Caco-2 (cell line): ENCODE measurements at regions of chr9 and their contacts with region 1.

Region 1: DNA sequence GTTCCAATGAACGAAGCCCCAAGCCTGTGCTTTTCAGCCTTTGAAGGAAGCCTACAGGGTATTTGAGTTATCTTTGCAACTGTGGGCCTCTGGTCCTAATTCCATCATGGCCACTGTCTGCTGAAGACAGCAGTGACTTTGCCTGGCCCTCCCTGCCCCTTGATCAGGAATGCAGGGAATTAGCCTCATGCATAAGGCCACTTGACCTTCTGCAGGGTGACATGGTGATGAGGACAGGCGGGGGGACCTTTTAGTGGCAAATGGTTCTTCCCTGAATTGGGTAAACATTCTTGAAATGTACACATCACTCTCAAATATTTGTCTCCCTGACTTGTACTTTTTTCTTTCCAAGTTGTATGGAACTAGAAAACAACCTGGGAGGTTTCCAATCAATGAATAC is 25.2 kb upstream of the XPA start:
- DNase-seq: peak; percentile 80 to 89
- H3K4me3 ChIP-seq: no peak overlapping the region
- H3K4me3 Mint-ChIP-seq: no peak overlapping the region
- H3K27ac Mint-ChIP-seq: peak overlapping the region; percentile 53
- H3K4me1 ChIP-seq: peaks cover 24% of the 10 kb centered on the region
- H3K4me1 Mint-ChIP-seq: peaks cover 5% of the 10 kb centered on the region
- H3K27me3 ChIP-seq: no peaks in the 10 kb centered on the region
- H3K27me3 Mint-ChIP-seq: no peaks in the 10 kb centered on the region
- CTCF ChIP-seq: no peak

Region 2: DNA sequence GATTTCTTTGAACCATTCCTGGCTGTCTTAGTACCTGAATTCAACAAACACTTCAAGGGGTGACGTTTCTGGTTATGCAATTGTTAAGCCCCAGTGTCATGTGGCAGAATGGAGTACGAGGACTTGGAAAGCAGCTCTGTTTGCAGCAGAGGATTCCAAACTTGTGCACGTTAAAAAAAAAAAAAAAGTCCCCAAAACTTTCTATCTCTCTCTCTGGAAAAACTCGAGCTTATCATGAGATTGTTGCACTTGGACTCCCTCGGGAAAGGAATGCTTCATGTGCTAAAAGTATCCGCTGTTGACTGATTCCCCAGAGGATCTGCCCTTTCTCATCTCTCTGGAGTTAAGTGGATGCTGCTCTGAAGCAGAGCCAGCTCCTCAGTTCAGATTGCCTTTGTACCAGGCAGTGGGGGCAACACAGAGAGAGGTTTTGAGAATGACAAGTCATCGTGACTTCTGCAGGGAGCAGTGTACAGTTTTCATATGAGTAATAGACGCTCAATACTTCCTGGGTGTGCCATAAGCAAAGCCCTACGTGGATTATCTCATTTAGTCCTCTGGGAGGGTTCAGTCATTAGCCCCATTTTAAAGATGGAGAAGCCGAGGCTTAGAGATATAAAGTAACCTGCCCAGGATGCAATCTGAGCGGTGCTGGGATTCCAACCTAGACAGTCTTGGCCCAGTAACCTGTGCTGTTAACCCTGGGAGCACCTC is 192.8 kb before region 1 on chr9:
- CTCF ChIA-PET with region 1: no interaction called
- POLR2A ChIA-PET with region 1: no interaction called
- intact Hi-C with region 1: no loop called
- DNase-seq: no peak
- H3K4me3 ChIP-seq: no peak overlapping the region
- H3K4me3 Mint-ChIP-seq: no peak overlapping the region
- H3K27ac Mint-ChIP-seq: no peak overlapping the region
- H3K4me1 ChIP-seq: peaks cover 12% of the 10 kb centered on the region; the same call in 1 of the 2 replicates
- H3K4me1 Mint-ChIP-seq: peaks cover 10% of the 10 kb centered on the region
- H3K27me3 ChIP-seq: no peaks in the 10 kb centered on the region
- H3K27me3 Mint-ChIP-seq: no peaks in the 10 kb centered on the region
- CTCF ChIP-seq: no peak

Region 3: DNA sequence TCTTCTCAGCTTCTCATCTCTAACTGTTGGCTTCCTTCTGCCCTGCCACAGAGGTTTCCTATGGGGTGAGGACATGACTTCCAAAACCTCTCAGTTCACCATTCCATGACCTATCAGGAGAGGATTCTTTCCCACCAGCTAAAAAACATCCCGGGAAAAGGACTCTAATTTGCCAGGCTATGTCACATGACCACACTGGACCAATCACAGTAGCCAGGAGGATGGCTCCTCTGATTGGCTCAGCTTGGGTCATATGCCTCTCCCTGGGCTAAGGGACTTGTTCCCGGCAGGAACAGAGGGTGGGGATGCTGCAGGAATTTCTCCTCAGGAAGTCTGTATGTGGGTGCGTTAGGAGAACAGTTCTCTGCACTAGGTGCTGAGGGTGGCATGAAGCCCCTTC is 15.1 kb after region 1 on chr9:
- CTCF ChIA-PET with region 1: no interaction called
- POLR2A ChIA-PET with region 1: no interaction called
- intact Hi-C with region 1: loop called (anchors 1 kb)
- DNase-seq: peak; percentile 21 to 65
- H3K4me3 ChIP-seq: no peak overlapping the region
- H3K4me3 Mint-ChIP-seq: no peak overlapping the region
- H3K27ac Mint-ChIP-seq: no peak overlapping the region
- H3K4me1 ChIP-seq: peaks cover 39% of the 10 kb centered on the region
- H3K4me1 Mint-ChIP-seq: peaks cover 8% of the 10 kb centered on the region
- H3K27me3 ChIP-seq: no peaks in the 10 kb centered on the region
- H3K27me3 Mint-ChIP-seq: no peaks in the 10 kb centered on the region
- CTCF ChIP-seq: no peak

Region 4: GRCh38 chr9:97747201-97747965 is 25.1 kb after region 1 on chr9:
- CTCF ChIA-PET with region 1: no interaction called
- POLR2A ChIA-PET with region 1: no interaction called
- intact Hi-C with region 1: loop called (anchors 1 kb)
- DNase-seq: peak; percentile 84 to 88
- H3K4me3 ChIP-seq: no peak overlapping the region
- H3K4me3 Mint-ChIP-seq: peak overlapping the region; percentile 71
- H3K27ac Mint-ChIP-seq: peak overlapping the region; percentile 85
- H3K4me1 ChIP-seq: peaks cover 81% of the 10 kb centered on the region
- H3K4me1 Mint-ChIP-seq: peaks cover 65% of the 10 kb centered on the region
- H3K27me3 ChIP-seq: no peaks in the 10 kb centered on the region
- H3K27me3 Mint-ChIP-seq: no peaks in the 10 kb centered on the region
- CTCF ChIP-seq: no peak

Region 5: DNA sequence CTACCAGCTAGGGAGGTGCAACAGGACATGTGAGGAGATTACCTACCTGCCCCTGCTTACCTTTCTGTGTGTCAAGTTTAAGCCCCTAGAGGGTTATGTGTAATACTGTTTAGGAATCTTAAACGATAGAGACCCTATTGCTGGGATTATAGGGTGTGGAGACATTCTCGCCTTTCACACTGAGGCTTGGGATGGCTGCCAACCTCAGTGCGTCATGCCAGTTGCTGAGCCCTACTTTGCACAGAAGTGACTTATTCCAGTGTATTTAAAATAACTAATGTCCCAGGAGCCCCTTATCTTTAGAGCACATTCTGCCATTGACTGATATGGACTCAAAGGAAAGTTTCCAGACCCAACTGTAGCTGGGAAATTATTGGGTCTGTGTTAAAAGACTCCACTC is 51.4 kb after region 1 on chr9:
- CTCF ChIA-PET with region 1: no interaction called
- POLR2A ChIA-PET with region 1: no interaction called
- intact Hi-C with region 1: no loop called
- DNase-seq: no peak
- H3K4me3 ChIP-seq: no peak overlapping the region
- H3K4me3 Mint-ChIP-seq: no peak overlapping the region
- H3K27ac Mint-ChIP-seq: no peak overlapping the region
- H3K4me1 ChIP-seq: peaks cover 14% of the 10 kb centered on the region; the same call in 1 of the 2 replicates
- H3K4me1 Mint-ChIP-seq: peaks cover 20% of the 10 kb centered on the region
- H3K27me3 ChIP-seq: no peaks in the 10 kb centered on the region
- H3K27me3 Mint-ChIP-seq: no peaks in the 10 kb centered on the region
- CTCF ChIP-seq: no peak